ENCODE measurements at regions of chr5 and their contacts with region 1.

Region 1: GRCh38 chr5:156934450-156935211 is 28.4 kb downstream of the TIMD4 start:
- DNase-seq: peak; percentile 62
- H3K4me3 Mint-ChIP-seq: peak overlapping the region; percentile 49
- H3K27ac Mint-ChIP-seq: peak overlapping the region; percentile 94
- H3K4me1 Mint-ChIP-seq: peaks cover 88% of the 10 kb centered on the region
- H3K27me3 Mint-ChIP-seq: no peaks in the 10 kb centered on the region

Region 2: DNA sequence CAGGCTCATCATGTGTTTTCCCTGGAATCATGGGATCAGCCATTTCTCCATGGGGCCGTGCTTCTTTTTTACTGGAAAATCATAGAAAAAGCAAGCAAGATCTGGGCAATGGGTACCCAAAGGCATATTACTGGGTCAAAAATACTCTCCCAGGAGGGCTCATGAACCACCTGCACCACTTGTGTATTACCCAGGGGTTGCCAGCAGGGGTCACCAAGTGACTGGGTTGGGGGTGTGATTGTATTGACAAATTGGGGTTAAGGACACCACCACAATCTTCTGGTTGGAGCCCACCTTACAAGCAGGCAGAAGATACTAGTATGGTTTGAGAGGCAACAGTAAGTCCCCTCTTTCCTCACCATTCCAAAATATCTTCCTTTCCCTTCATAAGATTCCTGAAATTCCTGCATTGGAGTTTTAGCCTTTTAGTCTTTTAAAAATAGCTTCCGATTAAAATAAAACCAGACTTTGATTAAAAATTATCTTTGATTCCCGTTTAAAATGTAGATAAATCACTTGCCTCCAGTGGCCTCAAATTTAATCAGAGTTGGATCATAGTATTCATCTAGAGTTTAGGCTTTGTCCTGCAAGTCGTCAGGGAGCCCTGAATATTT is 1317.7 kb before region 1 on chr5:
- intact Hi-C with region 1: loop called (anchors 5 kb)
- DNase-seq: peak; percentile 34
- H3K4me3 Mint-ChIP-seq: no peak overlapping the region
- H3K27ac Mint-ChIP-seq: no peak overlapping the region
- H3K4me1 Mint-ChIP-seq: no peaks in the 10 kb centered on the region
- H3K27me3 Mint-ChIP-seq: peaks cover 7% of the 10 kb centered on the region

Region 3: GRCh38 chr5:155943516-155944407 is 990.9 kb before region 1 on chr5:
- intact Hi-C with region 1: loop called (anchors 1 kb)
- DNase-seq: peak; percentile 19
- H3K4me3 Mint-ChIP-seq: no peak overlapping the region
- H3K27ac Mint-ChIP-seq: no peak overlapping the region
- H3K4me1 Mint-ChIP-seq: peaks cover 7% of the 10 kb centered on the region
- H3K27me3 Mint-ChIP-seq: peaks cover 14% of the 10 kb centered on the region

Region 4: GRCh38 chr5:156893517-156893916 is 41.1 kb before region 1 on chr5:
- intact Hi-C with region 1: loop called (anchors 1 kb)
- DNase-seq: no peak
- H3K4me3 Mint-ChIP-seq: peak overlapping the region; percentile 32
- H3K27ac Mint-ChIP-seq: peak overlapping the region; percentile 94
- H3K4me1 Mint-ChIP-seq: peaks cover 60% of the 10 kb centered on the region
- H3K27me3 Mint-ChIP-seq: no peaks in the 10 kb centered on the region

Measured in activated T-helper 1 cell treated with anti-CD3 and anti-CD28 coated beads, Interleukin-12 subunit alpha, Interleukin-12 subunit beta, Interleukin-2, Interleukin-4 antibody, amounts not matched to agents 30 ng/mL and 10 ng/mL and 1 ng/mL, durations not matched to agents 14 hours and 24 hours and 36 hours (primary cell).